ENCODE measurements at regions of chr12 and their contacts with region 1.

Region 1: GRCh38 chr12:101939856-101940265 is 62.5 kb downstream of the DRAM1 start:
- DNase-seq: peak; percentile 49
- H3K4me3 Mint-ChIP-seq: no peak overlapping the region
- H3K27ac Mint-ChIP-seq: no peak overlapping the region
- H3K4me1 Mint-ChIP-seq: peaks cover 40% of the 10 kb centered on the region
- H3K27me3 Mint-ChIP-seq: peaks cover 2% of the 10 kb centered on the region

Region 2: GRCh38 chr12:101919447-101919846 is 20.4 kb before region 1 on chr12:
- intact Hi-C with region 1: loop called (anchors 1 kb)
- DNase-seq: no peak
- H3K4me3 Mint-ChIP-seq: no peak overlapping the region
- H3K27ac Mint-ChIP-seq: no peak overlapping the region
- H3K4me1 Mint-ChIP-seq: peaks cover 5% of the 10 kb centered on the region
- H3K27me3 Mint-ChIP-seq: no peaks in the 10 kb centered on the region

Region 3: GRCh38 chr12:102169922-102170621 is 230.2 kb after region 1 on chr12:
- intact Hi-C with region 1: loop called (anchors 5 kb)
- DNase-seq: no peak
- H3K4me3 Mint-ChIP-seq: no peak overlapping the region
- H3K27ac Mint-ChIP-seq: no peak overlapping the region
- H3K4me1 Mint-ChIP-seq: peaks cover 26% of the 10 kb centered on the region
- H3K27me3 Mint-ChIP-seq: no peaks in the 10 kb centered on the region

Region 4: GRCh38 chr12:102479099-102479887 is 539.4 kb after region 1 on chr12:
- intact Hi-C with region 1: loop called (anchors 1 kb)
- DNase-seq: peak; percentile 17
- H3K4me3 Mint-ChIP-seq: no peak overlapping the region
- H3K27ac Mint-ChIP-seq: no peak overlapping the region
- H3K4me1 Mint-ChIP-seq: peaks cover 51% of the 10 kb centered on the region
- H3K27me3 Mint-ChIP-seq: no peaks in the 10 kb centered on the region

Region 5: DNA sequence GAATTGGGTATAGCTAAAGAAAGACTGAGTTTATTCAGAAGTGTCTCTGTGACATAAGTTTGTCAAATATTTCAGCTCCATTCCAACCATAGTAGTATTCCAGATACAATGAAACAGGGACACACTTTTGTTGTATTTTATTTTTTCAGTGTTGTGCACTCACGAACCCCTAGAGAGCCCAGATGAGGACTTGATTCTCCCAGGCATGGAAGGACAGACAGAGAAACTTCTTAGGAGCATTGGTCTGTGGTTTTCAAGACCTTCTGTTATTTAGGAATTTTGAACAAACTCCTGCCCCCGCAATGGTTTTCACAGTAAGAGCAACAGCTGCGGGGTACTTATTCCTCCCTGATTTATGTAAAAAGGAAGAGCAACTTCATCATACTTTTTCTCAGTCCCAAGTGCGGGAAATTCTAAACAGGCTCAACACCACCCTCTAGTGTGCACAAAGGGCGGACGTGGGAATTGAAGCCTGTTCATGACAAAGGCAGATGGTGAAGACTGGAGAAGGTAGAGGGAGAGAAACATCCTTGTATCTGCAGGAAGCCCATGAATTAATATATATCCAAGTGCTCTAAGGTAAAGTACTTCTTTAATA is 829.6 kb after region 1 on chr12:
- intact Hi-C with region 1: loop called (anchors 1 kb)
- DNase-seq: peak; percentile 23
- H3K4me3 Mint-ChIP-seq: no peak overlapping the region
- H3K27ac Mint-ChIP-seq: no peak overlapping the region
- H3K4me1 Mint-ChIP-seq: no peaks in the 10 kb centered on the region
- H3K27me3 Mint-ChIP-seq: peaks cover 2% of the 10 kb centered on the region

Measured in activated T-helper 2 cell treated with anti-CD3 and anti-CD28 coated beads, Interferon-gamma antibody, Interleukin-2, Interleukin-4, amounts not matched to agents 10 μg/mL and 5 μg/mL and 100 μg/mL, durations not matched to agents 14 hours and 24 hours and 36 hours (primary cell).